H1 (cell line): ENCODE measurements at regions of chr18 and their contacts with region 1.

Region 1: GRCh38 chr18:63936156-63936931 is 12.8 kb upstream of the HMSD start:
- DNase-seq: peak; percentile 70 to 88
- H3K4me3 ChIP-seq: peak overlapping the region; percentile 41 to 74 (median 56)
- H3K27ac ChIP-seq: no peak overlapping the region
- H3K4me1 ChIP-seq: 0 out of 7 replicates have a peak, but pooled peaks cover 0 to 3% (median 0%) of the 10 kb centered on the region in 4 experiments
- H3K27me3 ChIP-seq: peaks cover 3 to 19% (median 13%) of the 10 kb centered on the region in 4 experiments
- CTCF ChIP-seq: peak; percentile 77 to 82 (median 80)
- EP300 ChIP-seq: no peak
- POLR2A ChIP-seq: no peak
- RAD21 ChIP-seq: peak; percentile 83

Region 2: GRCh38 chr18:63511286-63511685 is 425.1 kb before region 1 on chr18:
- CTCF ChIA-PET with region 1: interaction called, 11 read pairs
- POLR2A ChIA-PET with region 1: no interaction called
- DNase-seq: peak; percentile 44 to 68
- H3K4me3 ChIP-seq: peak overlapping the region in 1 of 4 experiments; percentile 20; a peak in 1 of 8 replicates
- H3K27ac ChIP-seq: no peak overlapping the region
- H3K4me1 ChIP-seq: peaks cover 2 to 18% (median 9%) of the 10 kb centered on the region in 4 experiments; a peak in 4 of 7 replicates
- H3K27me3 ChIP-seq: no peaks in the 10 kb centered on the region
- CTCF ChIP-seq: peak in 2 of 3 experiments; percentile 79 to 83; a peak in 3 of 4 replicates
- EP300 ChIP-seq: no peak
- POLR2A ChIP-seq: no peak
- RAD21 ChIP-seq: peak; percentile 48 to 63

Region 3: GRCh38 chr18:63823518-63824219 is 112.7 kb before region 1 on chr18:
- CTCF ChIA-PET with region 1: interaction called, 20 read pairs
- POLR2A ChIA-PET with region 1: no interaction called
- DNase-seq: peak in 1 of 2 experiments; percentile 58
- H3K4me3 ChIP-seq: no peak overlapping the region
- H3K27ac ChIP-seq: no peak overlapping the region
- H3K4me1 ChIP-seq: no peaks in the 10 kb centered on the region
- H3K27me3 ChIP-seq: no peaks in the 10 kb centered on the region
- CTCF ChIP-seq: peak in 2 of 3 experiments; percentile 44 to 59; a peak in 3 of 4 replicates
- EP300 ChIP-seq: no peak
- POLR2A ChIP-seq: no peak
- RAD21 ChIP-seq: peak; percentile 39 to 50; a peak in 3 of 4 replicates

Region 4: DNA sequence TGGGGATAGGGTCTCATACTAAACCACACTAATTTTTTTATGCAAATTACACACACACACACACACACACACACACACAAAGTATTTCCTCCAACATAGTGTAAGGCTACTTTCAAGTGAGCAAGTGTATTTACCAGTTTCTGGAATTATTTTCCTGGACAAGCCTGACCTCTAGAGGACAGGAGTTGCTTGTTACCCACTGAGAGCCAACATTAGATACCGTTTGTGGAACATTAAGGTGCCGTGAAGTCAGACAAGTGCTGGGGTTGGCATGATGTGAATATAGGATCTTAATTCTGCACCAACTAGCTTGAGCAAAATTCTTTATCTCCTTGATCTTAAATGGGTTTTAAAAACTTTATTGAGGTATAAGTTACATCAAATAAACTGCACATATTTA is 88.2 kb before region 1 on chr18:
- CTCF ChIA-PET with region 1: interaction called, 10 read pairs
- POLR2A ChIA-PET with region 1: no interaction called
- DNase-seq: no peak
- H3K4me3 ChIP-seq: no peak overlapping the region
- H3K27ac ChIP-seq: no peak overlapping the region
- H3K4me1 ChIP-seq: no peaks in the 10 kb centered on the region
- H3K27me3 ChIP-seq: no peaks in the 10 kb centered on the region
- CTCF ChIP-seq: peak in 2 of 3 experiments; percentile 63 to 70; a peak in 3 of 4 replicates
- EP300 ChIP-seq: no peak
- POLR2A ChIP-seq: no peak
- RAD21 ChIP-seq: peak; percentile 75 to 79

Region 5: DNA sequence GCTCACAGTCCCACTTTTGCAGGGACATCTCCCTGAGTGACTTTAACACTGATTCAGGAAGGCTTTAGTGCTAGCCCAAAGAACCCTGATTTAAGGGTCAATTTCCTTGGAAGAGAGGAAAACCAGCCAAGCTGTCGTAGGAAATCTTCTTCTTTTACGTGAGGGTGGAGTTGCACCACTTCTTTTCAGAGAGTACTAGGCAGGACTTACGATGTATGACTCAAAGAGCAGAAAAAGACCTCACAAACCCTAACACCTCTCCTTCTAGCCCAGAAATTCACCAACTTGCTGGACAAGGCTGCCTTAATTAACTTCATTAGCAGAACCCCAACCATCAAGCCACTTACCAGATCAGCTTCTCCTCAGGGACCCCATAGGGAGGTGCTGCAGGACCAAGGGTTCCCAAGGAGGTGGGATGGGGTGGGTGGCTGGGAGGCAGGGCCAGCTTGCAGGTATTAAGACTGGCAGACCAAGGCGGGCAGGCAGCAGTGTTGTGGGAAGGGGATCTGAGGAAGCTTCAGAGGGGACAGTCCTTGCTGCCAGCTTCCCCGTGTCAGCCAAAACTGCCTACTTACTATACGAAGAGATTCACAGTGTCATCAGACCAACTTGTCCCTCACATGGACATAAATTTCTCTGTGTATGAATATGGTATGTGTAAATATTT is 42.1 kb before region 1 on chr18:
- CTCF ChIA-PET with region 1: interaction called, 10 read pairs
- POLR2A ChIA-PET with region 1: no interaction called
- DNase-seq: no peak
- H3K4me3 ChIP-seq: no peak overlapping the region
- H3K27ac ChIP-seq: no peak overlapping the region
- H3K4me1 ChIP-seq: no peaks in the 10 kb centered on the region
- H3K27me3 ChIP-seq: no peaks in the 10 kb centered on the region
- CTCF ChIP-seq: no peak
- EP300 ChIP-seq: no peak
- POLR2A ChIP-seq: no peak
- RAD21 ChIP-seq: no peak

Region 6: DNA sequence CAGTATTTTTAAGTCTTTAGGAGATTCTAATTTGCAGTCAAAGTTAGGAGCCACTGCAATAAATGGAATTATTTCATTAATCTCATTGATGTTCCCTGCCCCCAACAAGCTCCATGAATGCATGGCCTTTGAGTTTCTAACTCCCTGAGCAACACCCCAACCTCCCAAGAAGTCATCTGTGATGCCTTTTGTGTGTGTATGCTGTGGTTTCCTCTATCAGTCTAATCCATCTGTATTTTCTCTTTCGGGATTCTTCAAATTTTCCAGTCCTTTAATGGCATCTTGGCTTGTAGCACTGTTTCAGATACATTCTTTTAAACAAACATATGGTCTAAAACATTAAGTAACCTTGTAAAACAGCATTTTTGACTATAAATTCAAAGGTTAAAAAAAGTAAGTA is 11.8 kb before region 1 on chr18:
- CTCF ChIA-PET with region 1: interaction called, 12 read pairs
- POLR2A ChIA-PET with region 1: no interaction called
- DNase-seq: no peak
- H3K4me3 ChIP-seq: no peak overlapping the region
- H3K27ac ChIP-seq: no peak overlapping the region
- H3K4me1 ChIP-seq: no peaks in the 10 kb centered on the region
- H3K27me3 ChIP-seq: no peaks in the 10 kb centered on the region
- CTCF ChIP-seq: no peak
- EP300 ChIP-seq: no peak
- POLR2A ChIP-seq: no peak
- RAD21 ChIP-seq: no peak

Region 7: DNA sequence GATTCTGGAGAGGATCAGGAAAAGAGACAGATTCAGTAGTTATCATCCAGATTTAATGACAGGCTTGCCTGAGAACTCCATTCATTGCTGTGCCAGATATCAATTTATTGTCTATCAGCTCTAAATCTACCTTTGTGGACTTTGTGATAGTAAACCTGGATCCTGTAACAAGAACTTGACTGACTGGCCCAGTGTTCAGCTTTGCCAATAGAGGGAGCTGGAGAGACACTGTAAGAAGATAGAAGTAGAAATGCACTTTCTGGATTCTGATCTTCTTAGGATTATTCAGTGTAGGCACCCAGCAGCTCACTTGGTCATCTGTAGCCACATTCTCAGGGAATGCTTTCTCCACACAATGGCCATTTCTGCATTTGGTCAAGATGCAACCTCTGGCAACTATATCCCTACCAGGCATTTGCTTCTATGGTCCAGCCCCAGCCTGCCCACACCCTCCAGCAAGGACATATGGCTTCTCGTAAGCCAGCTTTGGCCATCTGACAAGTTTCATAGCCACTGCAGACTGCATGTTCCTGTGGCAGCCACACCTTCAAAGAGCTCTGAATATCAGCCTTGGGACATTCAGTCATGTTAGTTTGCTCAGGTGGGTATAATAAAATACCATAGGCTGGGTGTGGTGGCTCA is 27.4 kb after region 1 on chr18:
- CTCF ChIA-PET with region 1: interaction called, 35 read pairs
- POLR2A ChIA-PET with region 1: no interaction called
- DNase-seq: no peak
- H3K4me3 ChIP-seq: no peak overlapping the region
- H3K27ac ChIP-seq: no peak overlapping the region
- H3K4me1 ChIP-seq: no peaks in the 10 kb centered on the region; a peak in 1 of 7 replicates
- H3K27me3 ChIP-seq: no peaks in the 10 kb centered on the region; a peak in 1 of 7 replicates
- CTCF ChIP-seq: peak in 2 of 3 experiments; percentile 66 to 83; a peak in 3 of 4 replicates
- EP300 ChIP-seq: no peak
- POLR2A ChIP-seq: no peak
- RAD21 ChIP-seq: peak; percentile 64 to 65

Region 8: DNA sequence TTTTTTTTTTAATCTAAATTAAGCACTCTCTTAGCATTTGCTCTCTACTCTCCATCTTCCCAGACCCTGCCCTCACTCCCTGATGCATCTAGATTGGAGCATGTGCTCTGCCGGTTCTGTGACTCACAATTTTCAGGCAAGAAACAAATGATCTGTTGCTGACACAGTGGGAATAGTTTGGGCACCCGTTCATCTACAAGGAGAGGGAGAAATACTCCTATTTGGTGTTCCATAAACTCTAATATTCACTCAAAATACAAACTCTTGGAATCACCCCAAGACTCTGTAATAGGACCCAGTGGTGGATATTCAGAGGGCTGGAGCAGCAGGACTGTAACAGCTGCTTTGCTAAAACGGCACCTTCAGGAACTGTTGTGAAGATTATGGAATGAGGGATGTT is 249.6 kb after region 1 on chr18:
- CTCF ChIA-PET with region 1: no interaction called
- POLR2A ChIA-PET with region 1: no interaction called
- DNase-seq: no peak
- H3K4me3 ChIP-seq: no peak overlapping the region
- H3K27ac ChIP-seq: no peak overlapping the region
- H3K4me1 ChIP-seq: no peaks in the 10 kb centered on the region; a peak in 1 of 7 replicates
- H3K27me3 ChIP-seq: no peaks in the 10 kb centered on the region
- CTCF ChIP-seq: no peak
- EP300 ChIP-seq: no peak
- POLR2A ChIP-seq: no peak
- RAD21 ChIP-seq: no peak